ENCODE measurements at regions of chr3 and their contacts with region 1.

Region 1: GRCh38 chr3:179322286-179323196 is at the start of gene ZNF639:
- DNase-seq: peak; percentile 89
- ATAC-seq: peak; percentile 88
- H3K4me3 Mint-ChIP-seq: peak within 1 kb of the TSS; percentile 87
- H3K27ac Mint-ChIP-seq: peak within 1 kb of the TSS; percentile 89
- H3K4me1 Mint-ChIP-seq: peaks cover 36% of the 10 kb centered on the region
- H3K27me3 Mint-ChIP-seq: no peaks in the 10 kb centered on the region
- CTCF ChIP-seq: peak; percentile 57
- total RNA-seq, gene ZNF639: 37.1 and 41.4 TPM in 2 replicates

Region 2: DNA sequence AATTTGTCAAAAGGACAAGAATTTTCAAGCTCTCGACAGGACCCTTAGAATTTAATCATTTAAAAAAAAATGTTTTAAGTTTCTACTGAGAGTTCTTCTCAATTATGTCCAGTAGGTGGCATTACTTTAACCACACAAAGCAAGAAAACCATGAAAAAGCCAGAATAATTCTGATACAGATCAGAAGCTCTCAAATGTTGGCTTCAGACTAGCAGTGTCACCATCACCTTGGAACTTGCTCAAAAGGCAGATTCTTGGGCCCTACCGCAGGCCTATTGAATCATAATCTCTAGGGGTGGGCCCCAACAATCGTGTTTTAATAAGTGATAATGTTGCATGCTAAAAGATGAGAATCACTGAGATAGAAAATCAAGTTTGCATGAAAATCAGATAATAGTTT is 885.8 kb before region 1 on chr3:
- CTCF ChIA-PET with region 1: interaction called, 3 read pairs
- POLR2A ChIA-PET with region 1: no interaction called
- intact Hi-C with region 1: loop called (anchors 1 kb)
- DNase-seq: no peak
- ATAC-seq: no peak
- H3K4me3 Mint-ChIP-seq: no peak overlapping the region
- H3K27ac Mint-ChIP-seq: no peak overlapping the region
- H3K4me1 Mint-ChIP-seq: no peaks in the 10 kb centered on the region
- H3K27me3 Mint-ChIP-seq: no peaks in the 10 kb centered on the region
- CTCF ChIP-seq: peak; percentile 28

Region 3: DNA sequence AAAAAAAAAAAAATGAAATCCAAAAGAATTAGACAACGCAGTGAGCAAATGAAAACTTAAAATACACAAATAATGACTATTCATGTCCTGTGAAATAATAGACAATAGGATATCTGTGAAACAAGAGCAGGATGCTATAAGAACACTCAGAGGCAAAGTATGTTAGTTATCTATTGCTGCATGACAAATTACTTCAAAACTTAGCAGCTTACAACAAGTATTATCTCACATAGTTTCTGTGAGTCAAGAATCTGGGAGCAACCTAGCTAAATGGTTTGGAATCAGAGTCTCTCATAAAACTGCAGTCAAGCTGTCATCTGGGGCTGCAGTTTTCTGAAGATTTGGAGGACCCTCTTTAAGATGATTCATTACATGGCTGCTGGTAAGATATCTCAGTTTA is 214.5 kb before region 1 on chr3:
- CTCF ChIA-PET with region 1: interaction called, 33 read pairs
- POLR2A ChIA-PET with region 1: no interaction called
- intact Hi-C with region 1: no loop called
- DNase-seq: no peak
- ATAC-seq: no peak
- H3K4me3 Mint-ChIP-seq: no peak overlapping the region
- H3K27ac Mint-ChIP-seq: no peak overlapping the region
- H3K4me1 Mint-ChIP-seq: no peaks in the 10 kb centered on the region
- H3K27me3 Mint-ChIP-seq: peaks cover 13% of the 10 kb centered on the region
- CTCF ChIP-seq: no peak

Region 4: GRCh38 chr3:179347345-179348194 is 25.0 kb after region 1 on chr3 and contains the start of gene MFN1:
- CTCF ChIA-PET with region 1: interaction called, 5 read pairs
- POLR2A ChIA-PET with region 1: interaction called, 11 read pairs
- intact Hi-C with region 1: loop called (anchors 1 kb)
- DNase-seq: peak; percentile 80
- ATAC-seq: peak; percentile 88
- H3K4me3 Mint-ChIP-seq: peak within 1 kb of the TSS; percentile 98
- H3K27ac Mint-ChIP-seq: peak within 1 kb of the TSS; percentile 95
- H3K4me1 Mint-ChIP-seq: peaks cover 35% of the 10 kb centered on the region
- H3K27me3 Mint-ChIP-seq: no peaks in the 10 kb centered on the region
- CTCF ChIP-seq: no peak
- total RNA-seq, gene MFN1: 64.9 and 65.3 TPM in 2 replicates

Region 5: GRCh38 chr3:179451265-179452175 is 129.0 kb after region 1 on chr3 and contains the start of gene GNB4:
- CTCF ChIA-PET with region 1: no interaction called
- POLR2A ChIA-PET with region 1: no interaction called
- intact Hi-C with region 1: loop called (anchors 1 kb)
- DNase-seq: peak; percentile 74
- ATAC-seq: peak; percentile 88
- H3K4me3 Mint-ChIP-seq: peak within 1 kb of the TSS; percentile 92
- H3K27ac Mint-ChIP-seq: peak within 1 kb of the TSS; percentile 93
- H3K4me1 Mint-ChIP-seq: peaks cover 35% of the 10 kb centered on the region
- H3K27me3 Mint-ChIP-seq: no peaks in the 10 kb centered on the region
- CTCF ChIP-seq: no peak
- total RNA-seq, gene GNB4: 18.0 and 22.7 TPM in 2 replicates

Region 6: DNA sequence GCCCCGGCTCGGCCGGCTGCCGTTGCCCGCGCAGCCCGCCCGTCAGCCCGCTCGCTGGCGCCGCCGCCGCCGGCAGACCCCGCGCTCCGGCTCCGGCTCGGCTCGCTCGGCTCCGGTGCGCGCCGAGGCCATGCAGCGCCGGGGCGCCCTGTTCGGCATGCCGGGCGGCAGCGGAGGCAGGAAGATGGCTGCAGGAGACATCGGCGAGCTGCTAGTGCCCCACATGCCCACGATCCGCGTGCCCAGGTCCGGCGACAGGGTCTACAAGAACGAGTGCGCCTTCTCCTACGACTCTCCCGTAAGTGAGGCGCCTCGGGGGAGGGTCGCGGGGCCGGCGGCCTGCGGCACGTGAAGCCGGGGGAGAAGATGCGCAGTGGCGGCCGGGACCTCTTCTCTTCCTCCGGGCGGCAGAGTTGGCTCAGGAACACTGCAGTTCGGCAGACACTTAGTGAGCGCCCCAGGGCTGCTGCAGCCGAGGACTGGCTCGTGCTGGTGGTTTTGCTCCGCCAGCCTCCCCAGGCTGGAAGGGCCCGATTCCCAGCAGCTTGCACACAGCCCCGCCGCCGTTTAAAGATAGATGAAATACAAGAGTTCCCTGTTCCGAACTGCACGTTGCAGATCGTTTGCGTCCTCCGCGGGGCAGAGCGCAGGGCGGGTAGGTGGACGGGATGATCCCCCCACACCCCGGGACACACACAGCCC is 330.7 kb after region 1 on chr3:
- CTCF ChIA-PET with region 1: no interaction called
- POLR2A ChIA-PET with region 1: no interaction called
- intact Hi-C with region 1: loop called (anchors 2 kb)
- DNase-seq: peak; percentile 66
- ATAC-seq: peak; percentile 38
- H3K4me3 Mint-ChIP-seq: peak overlapping the region; percentile 91
- H3K27ac Mint-ChIP-seq: peak overlapping the region; percentile 87
- H3K4me1 Mint-ChIP-seq: peaks cover 25% of the 10 kb centered on the region
- H3K27me3 Mint-ChIP-seq: no peaks in the 10 kb centered on the region
- CTCF ChIP-seq: no peak

Region 7: DNA sequence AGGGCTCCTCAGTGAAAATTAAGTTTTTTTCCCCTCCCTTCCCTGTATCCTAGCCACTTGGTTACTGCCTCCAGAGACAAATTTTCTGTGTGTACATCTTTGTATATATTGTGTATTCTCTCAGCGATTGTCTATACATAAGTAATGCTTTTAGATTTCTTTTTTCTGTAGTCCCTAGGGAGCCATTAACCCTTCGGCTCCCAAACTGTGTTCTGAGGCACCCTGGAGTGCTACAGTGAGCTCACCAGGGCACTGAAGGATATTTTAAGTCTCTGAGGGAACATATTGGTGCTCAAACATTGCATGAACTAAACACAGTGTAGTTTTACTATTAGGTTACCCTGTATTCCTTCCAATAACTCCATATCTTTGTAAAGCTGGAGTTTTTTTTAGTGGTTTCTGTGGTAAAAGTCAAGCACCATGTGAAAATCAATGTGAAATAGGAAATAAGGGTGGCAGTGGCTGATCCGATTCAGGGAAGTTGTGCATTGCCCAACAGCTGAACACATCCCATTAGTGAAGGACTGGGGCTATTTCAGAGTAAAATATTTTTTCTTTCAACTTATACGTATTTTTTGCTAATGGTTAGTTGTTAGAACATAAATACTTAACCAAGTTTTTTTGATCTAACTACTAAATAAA is 373.3 kb after region 1 on chr3:
- CTCF ChIA-PET with region 1: no interaction called
- POLR2A ChIA-PET with region 1: no interaction called
- intact Hi-C with region 1: no loop called
- DNase-seq: no peak
- ATAC-seq: no peak
- H3K4me3 Mint-ChIP-seq: no peak overlapping the region
- H3K27ac Mint-ChIP-seq: no peak overlapping the region
- H3K4me1 Mint-ChIP-seq: peaks cover 13% of the 10 kb centered on the region
- H3K27me3 Mint-ChIP-seq: no peaks in the 10 kb centered on the region
- CTCF ChIP-seq: no peak

Region 8: DNA sequence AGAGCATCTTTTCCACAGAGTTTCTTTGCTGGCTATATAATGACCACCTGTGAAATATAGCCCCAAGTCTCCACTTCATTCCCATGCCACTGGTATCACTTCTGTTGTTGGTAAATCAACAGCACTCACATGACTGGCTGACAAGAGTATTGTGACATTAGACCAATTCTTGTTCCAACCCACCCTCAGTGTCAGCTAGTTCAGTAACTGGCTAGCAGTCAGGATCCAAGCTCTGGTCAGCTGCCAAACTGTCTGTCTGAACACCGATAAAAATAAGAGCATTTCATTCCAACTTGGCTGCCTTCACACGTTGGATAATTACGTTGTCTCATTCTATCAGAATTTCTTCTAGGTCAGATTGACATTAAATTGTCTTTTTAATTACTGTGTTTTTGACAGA is 496.8 kb after region 1 on chr3:
- CTCF ChIA-PET with region 1: no interaction called
- POLR2A ChIA-PET with region 1: no interaction called
- intact Hi-C with region 1: no loop called
- DNase-seq: no peak
- ATAC-seq: no peak
- H3K4me3 Mint-ChIP-seq: no peak overlapping the region
- H3K27ac Mint-ChIP-seq: no peak overlapping the region
- H3K4me1 Mint-ChIP-seq: no peaks in the 10 kb centered on the region
- H3K27me3 Mint-ChIP-seq: peaks cover 24% of the 10 kb centered on the region
- CTCF ChIP-seq: no peak

Measured in activated B cell treated with CpG ODN at 0.5 μM for 24 hours (primary cell).